MCF 10A (cell line): ENCODE measurements at regions of chr11 and their contacts with region 1.

Region 1: DNA sequence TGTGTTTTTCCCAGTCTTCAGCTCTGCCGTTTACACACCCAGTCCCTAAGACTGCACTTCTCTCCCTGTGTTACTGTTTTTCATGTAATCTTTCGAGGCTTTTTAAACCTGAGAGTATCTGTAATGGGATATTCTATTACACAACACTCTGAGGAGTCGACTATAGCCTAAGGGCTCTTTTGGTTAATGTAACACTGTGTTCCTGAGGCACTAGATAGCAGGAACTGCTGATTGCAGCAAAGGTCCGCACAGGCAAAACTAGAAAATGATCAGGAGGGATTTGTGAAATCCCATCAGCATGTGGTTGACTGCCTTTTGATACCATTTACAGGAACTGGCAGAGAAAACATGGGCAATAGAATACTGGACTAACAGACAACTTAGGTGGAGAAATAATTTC is 512.3 kb upstream of the RAG2 start:
- DNase-seq: peak; percentile 74
- H3K4me3 Mint-ChIP-seq: peak overlapping the region; percentile 3
- H3K27ac Mint-ChIP-seq: peak overlapping the region; percentile 14
- H3K4me1 Mint-ChIP-seq: peaks cover 30% of the 10 kb centered on the region
- H3K27me3 Mint-ChIP-seq: no peaks in the 10 kb centered on the region
- CTCF ChIP-seq: no peak

Region 2: GRCh38 chr11:36929401-36929800 is 181.0 kb before region 1 on chr11:
- CTCF ChIA-PET with region 1: no interaction called
- POLR2A ChIA-PET with region 1: no interaction called
- intact Hi-C with region 1: no loop called
- DNase-seq: no peak
- H3K4me3 Mint-ChIP-seq: no peak overlapping the region
- H3K27ac Mint-ChIP-seq: no peak overlapping the region
- H3K4me1 Mint-ChIP-seq: no peaks in the 10 kb centered on the region
- H3K27me3 Mint-ChIP-seq: no peaks in the 10 kb centered on the region
- CTCF ChIP-seq: no peak

Region 3: GRCh38 chr11:37124384-37124783 is 14.0 kb after region 1 on chr11:
- CTCF ChIA-PET with region 1: interaction called, 5 read pairs
- POLR2A ChIA-PET with region 1: interaction called, 11 read pairs
- intact Hi-C with region 1: no loop called
- DNase-seq: no peak
- H3K4me3 Mint-ChIP-seq: no peak overlapping the region
- H3K27ac Mint-ChIP-seq: no peak overlapping the region
- H3K4me1 Mint-ChIP-seq: peaks cover 12% of the 10 kb centered on the region
- H3K27me3 Mint-ChIP-seq: no peaks in the 10 kb centered on the region
- CTCF ChIP-seq: no peak

Region 4: GRCh38 chr11:37248145-37248544 is 137.8 kb after region 1 on chr11:
- CTCF ChIA-PET with region 1: no interaction called
- POLR2A ChIA-PET with region 1: no interaction called
- intact Hi-C with region 1: no loop called
- DNase-seq: no peak
- H3K4me3 Mint-ChIP-seq: no peak overlapping the region
- H3K27ac Mint-ChIP-seq: no peak overlapping the region
- H3K4me1 Mint-ChIP-seq: no peaks in the 10 kb centered on the region
- H3K27me3 Mint-ChIP-seq: no peaks in the 10 kb centered on the region
- CTCF ChIP-seq: no peak